ENCODE measurements at regions of chr1 and their contacts with region 1.

Region 1: GRCh38 chr1:204506961-204507387 is 9.2 kb upstream of the MDM4 start:
- DNase-seq: peak; percentile 97
- ATAC-seq: peak; percentile 75
- H3K4me3 ChIP-seq: peak overlapping the region; percentile 51 to 90 (median 67)
- H3K4me3 Mint-ChIP-seq: peak overlapping the region; percentile 97
- H3K27ac ChIP-seq: peak overlapping the region; percentile 94 to 99
- H3K27ac Mint-ChIP-seq: peak overlapping the region; percentile 99
- H3K4me1 ChIP-seq: peaks cover 48 to 52% of the 10 kb centered on the region in 2 donors
- H3K4me1 Mint-ChIP-seq: peaks cover 62% of the 10 kb centered on the region
- H3K27me3 ChIP-seq: no peaks in the 10 kb centered on the region
- H3K27me3 Mint-ChIP-seq: no peaks in the 10 kb centered on the region
- CTCF ChIP-seq: no peak

Region 2: DNA sequence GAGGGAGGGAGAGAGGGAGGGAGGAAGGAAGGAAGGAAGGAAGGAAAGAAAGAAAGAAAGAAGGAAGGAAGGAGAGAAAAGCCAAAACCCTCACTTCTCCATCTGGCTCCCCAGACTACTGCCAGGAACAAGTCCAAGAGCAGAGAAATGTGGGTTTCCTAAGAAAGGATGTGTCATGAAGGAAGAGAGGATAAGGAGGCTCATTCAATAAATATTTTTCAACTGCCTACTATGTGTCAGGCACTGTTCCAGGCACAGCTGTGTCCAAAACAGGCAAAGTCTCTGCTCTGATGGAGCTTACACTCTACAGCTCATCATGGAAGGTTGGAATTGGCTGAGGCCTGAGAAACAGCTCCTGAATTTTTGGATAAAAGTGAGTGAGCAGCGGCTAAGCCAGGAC is 922.9 kb before region 1 on chr1:
- CTCF ChIA-PET with region 1: no interaction called
- POLR2A ChIA-PET with region 1: no interaction called
- intact Hi-C with region 1: no loop called
- DNase-seq: no peak
- ATAC-seq: no peak
- H3K4me3 ChIP-seq: no peak overlapping the region
- H3K4me3 Mint-ChIP-seq: no peak overlapping the region
- H3K27ac ChIP-seq: no peak overlapping the region
- H3K27ac Mint-ChIP-seq: no peak overlapping the region
- H3K4me1 ChIP-seq: no peaks in the 10 kb centered on the region
- H3K4me1 Mint-ChIP-seq: no peaks in the 10 kb centered on the region
- H3K27me3 ChIP-seq: no peaks in the 10 kb centered on the region
- H3K27me3 Mint-ChIP-seq: peaks cover 23% of the 10 kb centered on the region
- CTCF ChIP-seq: no peak

Region 3: GRCh38 chr1:204114606-204115005 is 392.4 kb before region 1 on chr1:
- CTCF ChIA-PET with region 1: no interaction called
- POLR2A ChIA-PET with region 1: no interaction called
- intact Hi-C with region 1: no loop called
- DNase-seq: no peak
- ATAC-seq: no peak
- H3K4me3 ChIP-seq: no peak overlapping the region
- H3K4me3 Mint-ChIP-seq: no peak overlapping the region
- H3K27ac ChIP-seq: no peak overlapping the region
- H3K27ac Mint-ChIP-seq: no peak overlapping the region
- H3K4me1 ChIP-seq: no peaks in the 10 kb centered on the region
- H3K4me1 Mint-ChIP-seq: peaks cover 3% of the 10 kb centered on the region
- H3K27me3 ChIP-seq: no peaks in the 10 kb centered on the region
- H3K27me3 Mint-ChIP-seq: peaks cover 4% of the 10 kb centered on the region
- CTCF ChIP-seq: no peak

Region 4: GRCh38 chr1:204162231-204163074 is 344.5 kb before region 1 on chr1:
- CTCF ChIA-PET with region 1: no interaction called
- POLR2A ChIA-PET with region 1: no interaction called
- intact Hi-C with region 1: loop called (anchors 2 kb)
- DNase-seq: peak; percentile 78
- ATAC-seq: peak; percentile 92
- H3K4me3 ChIP-seq: no peak overlapping the region
- H3K4me3 Mint-ChIP-seq: no peak overlapping the region
- H3K27ac ChIP-seq: no peak overlapping the region
- H3K27ac Mint-ChIP-seq: no peak overlapping the region
- H3K4me1 ChIP-seq: no peaks in the 10 kb centered on the region
- H3K4me1 Mint-ChIP-seq: no peaks in the 10 kb centered on the region
- H3K27me3 ChIP-seq: peaks cover 0 to 17% (median 3%) of the 10 kb centered on the region in 4 experiments
- H3K27me3 Mint-ChIP-seq: peaks cover 32% of the 10 kb centered on the region
- CTCF ChIP-seq: peak; percentile 98

Region 5: GRCh38 chr1:204411451-204412204 is 95.3 kb before region 1 on chr1 and contains the start of gene PPP1R15B:
- CTCF ChIA-PET with region 1: interaction called, 14 read pairs
- POLR2A ChIA-PET with region 1: interaction called, 6 read pairs
- intact Hi-C with region 1: loop called (anchors 2 kb)
- DNase-seq: peak; percentile 100
- ATAC-seq: peak; percentile 91
- H3K4me3 ChIP-seq: peak within 1 kb of the TSS; percentile 80 to 100 (median 92)
- H3K4me3 Mint-ChIP-seq: peak within 1 kb of the TSS; percentile 99
- H3K27ac ChIP-seq: peak within 1 kb of the TSS; percentile 98 to 99
- H3K27ac Mint-ChIP-seq: peak within 1 kb of the TSS; percentile 99
- H3K4me1 ChIP-seq: peaks cover 8 to 24% of the 10 kb centered on the region in 2 donors
- H3K4me1 Mint-ChIP-seq: peaks cover 36% of the 10 kb centered on the region
- H3K27me3 ChIP-seq: no peaks in the 10 kb centered on the region
- H3K27me3 Mint-ChIP-seq: no peaks in the 10 kb centered on the region
- CTCF ChIP-seq: no peak
- total RNA-seq, gene PPP1R15B: 65.7 and 68.0 TPM in 2 replicates

Region 6: GRCh38 chr1:204446370-204447111 is 60.4 kb before region 1 on chr1:
- CTCF ChIA-PET with region 1: interaction called, 1,884 read pairs
- POLR2A ChIA-PET with region 1: interaction called, 10 read pairs
- intact Hi-C with region 1: loop called (anchors 1 kb)
- DNase-seq: peak; percentile 90
- ATAC-seq: peak; percentile 88
- H3K4me3 ChIP-seq: no peak overlapping the region
- H3K4me3 Mint-ChIP-seq: peak overlapping the region; percentile 52
- H3K27ac ChIP-seq: peak overlapping the region; percentile 27 to 64
- H3K27ac Mint-ChIP-seq: peak overlapping the region; percentile 81
- H3K4me1 ChIP-seq: peaks cover 57 to 59% of the 10 kb centered on the region in 2 donors
- H3K4me1 Mint-ChIP-seq: peaks cover 58% of the 10 kb centered on the region
- H3K27me3 ChIP-seq: no peaks in the 10 kb centered on the region
- H3K27me3 Mint-ChIP-seq: no peaks in the 10 kb centered on the region
- CTCF ChIP-seq: peak; percentile 89

Region 7: DNA sequence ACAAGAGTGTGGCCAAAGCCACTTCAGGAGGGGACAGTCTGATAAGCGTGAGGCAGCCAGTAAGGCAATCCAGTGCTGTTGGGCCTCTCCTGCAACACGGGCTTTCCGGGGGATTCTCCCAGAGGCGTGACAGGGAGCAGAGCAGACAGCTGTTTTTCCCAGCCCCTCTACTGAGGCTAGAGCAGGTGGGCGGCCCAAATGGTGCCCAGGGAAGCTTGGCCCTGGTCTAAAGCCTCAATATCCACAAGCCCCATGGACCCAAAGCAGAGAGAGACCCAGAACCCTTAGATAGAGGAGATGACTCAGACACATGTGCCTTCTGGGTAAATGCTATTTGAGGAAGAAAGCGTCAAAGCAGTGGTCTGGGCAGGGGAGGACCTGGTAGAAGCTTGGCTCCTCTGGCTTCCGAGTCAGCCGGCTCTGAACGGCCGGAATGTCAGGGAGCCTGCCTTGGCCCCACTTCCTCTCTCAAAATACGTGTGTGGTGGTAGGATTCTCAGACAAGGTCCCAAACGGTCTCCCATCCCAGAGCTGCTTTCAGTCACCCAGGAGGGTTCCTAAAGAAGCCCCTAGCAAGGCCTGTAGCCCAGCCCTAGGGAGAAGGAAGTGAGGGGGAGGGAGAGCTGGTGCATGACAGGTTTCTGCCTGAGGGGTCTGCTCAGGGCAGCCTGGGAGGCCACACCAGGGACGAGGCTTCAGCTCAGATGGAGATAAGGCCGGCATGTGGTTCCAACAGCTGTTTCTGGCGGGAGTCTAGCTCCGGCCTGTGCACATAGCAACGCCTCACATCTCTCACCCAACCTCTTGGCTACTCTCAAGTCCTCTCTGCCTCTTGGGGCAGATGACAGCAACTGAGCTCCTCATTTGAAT is 41.2 kb before region 1 on chr1:
- CTCF ChIA-PET with region 1: interaction called, 1,884 read pairs
- POLR2A ChIA-PET with region 1: interaction called, 11 read pairs
- intact Hi-C with region 1: no loop called
- DNase-seq: peak; percentile 57
- ATAC-seq: peak; percentile 49
- H3K4me3 ChIP-seq: peak overlapping the region in 1 of 5 experiments; percentile 2
- H3K4me3 Mint-ChIP-seq: peak overlapping the region; percentile 80
- H3K27ac ChIP-seq: peak overlapping the region; percentile 57 to 72
- H3K27ac Mint-ChIP-seq: peak overlapping the region; percentile 95
- H3K4me1 ChIP-seq: peaks cover 77 to 80% of the 10 kb centered on the region in 2 donors
- H3K4me1 Mint-ChIP-seq: peaks cover 84% of the 10 kb centered on the region
- H3K27me3 ChIP-seq: no peaks in the 10 kb centered on the region
- H3K27me3 Mint-ChIP-seq: no peaks in the 10 kb centered on the region
- CTCF ChIP-seq: no peak

Region 8: DNA sequence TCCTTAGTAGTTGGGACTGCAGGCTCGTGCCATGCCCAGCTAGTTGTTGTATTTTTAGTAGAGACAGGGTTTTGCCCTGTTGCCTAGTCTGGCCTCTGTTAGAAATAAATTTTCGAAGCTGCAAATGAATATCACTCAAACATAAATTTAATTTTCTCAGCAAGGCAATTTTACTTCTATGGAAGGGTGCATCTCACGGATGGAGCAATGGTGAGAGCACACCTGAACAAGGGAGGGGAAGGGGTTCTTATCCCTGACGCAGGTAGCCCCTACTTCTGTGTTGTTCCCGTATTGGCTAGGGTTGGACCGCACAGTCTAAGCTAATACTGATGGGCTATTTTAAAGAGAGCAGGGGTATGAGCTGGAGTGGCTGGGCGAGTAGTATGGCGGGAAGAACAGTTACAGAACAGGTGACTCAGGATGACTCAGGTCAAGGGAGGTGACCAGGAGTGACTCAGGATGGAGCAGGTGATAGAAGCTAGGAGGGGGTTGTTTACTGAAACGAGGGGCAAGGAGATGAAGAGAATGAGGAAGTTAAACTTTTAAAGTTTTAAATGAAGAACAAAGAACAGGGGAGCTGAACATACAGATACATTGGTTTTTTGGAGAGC is 16.7 kb after region 1 on chr1:
- CTCF ChIA-PET with region 1: interaction called, 32 read pairs
- POLR2A ChIA-PET with region 1: interaction called, 91 read pairs
- intact Hi-C with region 1: loop called (anchors 1 kb)
- DNase-seq: peak; percentile 48
- ATAC-seq: peak; percentile 19
- H3K4me3 ChIP-seq: peak overlapping the region in 1 of 5 experiments; percentile 6
- H3K4me3 Mint-ChIP-seq: peak overlapping the region; percentile 62
- H3K27ac ChIP-seq: peak overlapping the region in 1 of 2 donors; percentile 67
- H3K27ac Mint-ChIP-seq: peak overlapping the region; percentile 89
- H3K4me1 ChIP-seq: peaks cover 59 to 65% of the 10 kb centered on the region in 2 donors
- H3K4me1 Mint-ChIP-seq: peaks cover 50% of the 10 kb centered on the region
- H3K27me3 ChIP-seq: no peaks in the 10 kb centered on the region
- H3K27me3 Mint-ChIP-seq: no peaks in the 10 kb centered on the region
- CTCF ChIP-seq: no peak

Region 9: DNA sequence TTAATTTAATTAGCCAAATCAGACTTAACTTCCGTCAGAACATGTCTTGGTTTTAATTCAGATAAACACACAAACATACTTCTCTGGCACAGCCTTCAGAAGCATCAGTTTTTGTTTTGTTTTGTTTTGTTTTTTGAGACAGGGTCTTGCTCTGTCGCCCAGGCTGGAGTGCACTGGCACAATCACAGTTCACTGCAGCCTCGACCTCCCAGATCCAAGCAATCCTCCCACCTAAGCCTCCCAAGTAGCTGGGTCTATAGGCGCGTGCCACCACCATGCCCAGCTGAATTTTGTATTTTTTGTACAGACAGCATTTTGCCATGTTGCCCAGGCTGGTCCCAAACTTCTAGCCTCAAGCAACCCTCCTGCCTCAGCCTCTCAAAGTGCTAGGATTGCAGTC is 44.0 kb after region 1 on chr1:
- CTCF ChIA-PET with region 1: interaction called, 10 read pairs
- POLR2A ChIA-PET with region 1: no interaction called
- intact Hi-C with region 1: no loop called
- DNase-seq: no peak
- ATAC-seq: no peak
- H3K4me3 ChIP-seq: no peak overlapping the region
- H3K4me3 Mint-ChIP-seq: no peak overlapping the region
- H3K27ac ChIP-seq: peak overlapping the region in 1 of 2 donors; percentile 2
- H3K27ac Mint-ChIP-seq: no peak overlapping the region
- H3K4me1 ChIP-seq: no peaks in the 10 kb centered on the region
- H3K4me1 Mint-ChIP-seq: peaks cover 6% of the 10 kb centered on the region
- H3K27me3 ChIP-seq: no peaks in the 10 kb centered on the region
- H3K27me3 Mint-ChIP-seq: no peaks in the 10 kb centered on the region
- CTCF ChIP-seq: no peak

Region 10: GRCh38 chr1:204697893-204698292 is 190.9 kb after region 1 on chr1:
- CTCF ChIA-PET with region 1: no interaction called
- POLR2A ChIA-PET with region 1: no interaction called
- intact Hi-C with region 1: no loop called
- DNase-seq: no peak
- ATAC-seq: no peak
- H3K4me3 ChIP-seq: no peak overlapping the region
- H3K4me3 Mint-ChIP-seq: no peak overlapping the region
- H3K27ac ChIP-seq: no peak overlapping the region
- H3K27ac Mint-ChIP-seq: no peak overlapping the region
- H3K4me1 ChIP-seq: no peaks in the 10 kb centered on the region
- H3K4me1 Mint-ChIP-seq: no peaks in the 10 kb centered on the region
- H3K27me3 ChIP-seq: peaks cover 0 to 6% (median 0%) of the 10 kb centered on the region in 4 experiments
- H3K27me3 Mint-ChIP-seq: peaks cover 26% of the 10 kb centered on the region
- CTCF ChIP-seq: no peak

Measured in B cell (primary cell).